ENCODE measurements at regions of chr16 and their contacts with region 1.

Region 1: DNA sequence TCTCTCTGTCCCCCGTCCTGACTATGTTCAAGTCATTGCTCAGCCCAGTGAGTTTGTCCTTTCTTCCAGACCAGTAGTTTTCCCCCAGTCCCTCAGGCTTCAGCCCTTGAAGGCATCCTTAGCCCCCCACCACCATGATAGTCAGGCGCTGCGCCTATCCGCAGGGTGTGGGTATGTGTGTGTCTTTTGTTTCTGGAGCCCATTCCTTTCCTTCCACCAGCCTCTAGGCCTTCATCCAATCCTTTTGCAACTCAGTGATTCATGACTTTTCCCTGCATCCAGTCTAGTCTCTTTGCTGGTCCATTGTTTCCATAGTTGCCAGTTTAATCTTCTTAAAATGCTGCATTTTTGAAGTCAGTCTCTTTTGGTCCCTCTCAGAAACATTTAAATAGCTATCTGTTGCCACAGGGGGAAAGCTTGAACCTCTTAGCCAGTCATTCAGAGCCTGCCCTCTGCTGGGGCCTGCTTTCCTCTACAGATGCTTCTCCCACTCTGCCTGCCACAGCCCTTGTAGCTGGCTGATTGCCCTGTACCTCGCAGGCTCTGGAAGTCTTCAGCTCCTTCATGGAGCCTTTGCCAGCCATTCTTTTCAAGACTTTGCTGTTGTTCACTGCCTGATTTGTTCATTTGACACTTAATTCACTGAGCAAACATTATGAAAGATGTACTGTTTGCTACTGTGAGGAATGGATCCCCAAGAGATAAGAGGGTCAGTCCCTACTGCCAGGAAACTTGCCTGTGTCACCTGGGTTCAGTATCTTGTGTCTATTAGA is 55.9 kb upstream of the ADCY7 start:
- DNase-seq: peak; percentile 25 to 73 (median 61)
- ATAC-seq: peak; percentile 93
- H3K4me3 ChIP-seq: no peak overlapping the region
- H3K4me3 Mint-ChIP-seq: no peak overlapping the region
- H3K27ac ChIP-seq: no peak overlapping the region
- H3K27ac Mint-ChIP-seq: peak overlapping the region; percentile 48 to 90 (median 83)
- H3K4me1 ChIP-seq: no peaks in the 10 kb centered on the region
- H3K4me1 Mint-ChIP-seq: peaks cover 17 to 50% (median 38%) of the 10 kb centered on the region in 7 donors
- H3K27me3 ChIP-seq: no peaks in the 10 kb centered on the region
- H3K27me3 Mint-ChIP-seq: no peaks in the 10 kb centered on the region

Region 2: DNA sequence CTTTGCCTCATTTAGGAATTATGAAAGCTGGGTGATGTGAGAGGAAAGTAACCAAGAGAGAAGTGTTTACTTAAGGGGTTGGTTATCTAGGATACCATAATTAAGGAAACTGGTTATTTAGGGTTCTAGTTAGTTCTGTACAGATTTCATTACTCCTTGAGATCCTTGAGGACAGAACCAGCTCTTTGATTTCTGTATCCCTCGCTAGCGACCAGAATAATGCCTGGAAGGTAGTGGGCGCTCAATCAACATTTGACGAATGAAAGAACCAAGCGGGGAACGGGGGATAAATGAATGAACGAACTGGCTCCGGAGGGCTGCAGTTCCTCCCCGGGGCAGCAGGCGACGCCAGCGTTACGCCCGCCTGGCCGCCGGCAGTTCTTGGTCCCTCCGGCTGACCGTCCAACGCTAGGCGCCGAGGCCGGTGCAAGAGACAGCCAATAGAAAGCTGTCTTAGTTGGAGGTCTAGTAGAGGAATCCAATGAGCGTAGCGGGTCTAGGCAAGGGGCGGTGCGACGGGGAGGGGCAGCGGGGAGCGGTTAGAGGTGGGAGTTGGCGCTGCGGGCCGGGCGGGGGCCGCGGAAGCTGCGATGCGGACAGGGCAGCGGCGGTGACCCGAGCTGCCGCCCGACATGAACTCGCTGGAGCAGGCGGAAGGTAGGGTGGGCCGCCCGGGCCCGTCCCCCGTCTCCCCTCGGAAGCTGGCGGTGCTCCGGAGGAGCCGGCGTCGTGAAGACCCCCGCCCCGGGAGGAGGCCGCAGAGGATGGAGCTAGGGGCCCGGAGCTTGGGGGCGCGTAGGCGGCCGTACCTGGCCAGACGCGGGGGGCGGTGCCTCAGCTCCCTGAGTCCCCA is 185.5 kb before region 1 on chr16 and contains the start of gene CNEP1R1:
- CTCF ChIA-PET with region 1: interaction called, 58 read pairs
- POLR2A ChIA-PET with region 1: interaction called, 8 read pairs
- intact Hi-C with region 1: loop called (anchors 1 kb)
- DNase-seq: peak; percentile 82 to 95 (median 92)
- ATAC-seq: peak; percentile 98
- H3K4me3 ChIP-seq: peak within 1 kb of the TSS; percentile 97
- H3K4me3 Mint-ChIP-seq: peak within 1 kb of the TSS; percentile 88 to 99 (median 96)
- H3K27ac ChIP-seq: peak within 1 kb of the TSS; percentile 81
- H3K27ac Mint-ChIP-seq: peak within 1 kb of the TSS; percentile 87 to 97 (median 94)
- H3K4me1 ChIP-seq: peaks cover 11 to 16% of the 10 kb centered on the region in 2 donors
- H3K4me1 Mint-ChIP-seq: peaks cover 5 to 42% (median 28%) of the 10 kb centered on the region in 7 donors
- H3K27me3 ChIP-seq: no peaks in the 10 kb centered on the region
- H3K27me3 Mint-ChIP-seq: peaks cover 0 to 16% (median 0%) of the 10 kb centered on the region in 5 donors
- total RNA-seq, gene CNEP1R1: 26.8 to 41.0 (median 34.3) TPM

Region 3: GRCh38 chr16:50152807-50153452 is 57.5 kb before region 1 on chr16 and contains the start of gene TENT4B:
- CTCF ChIA-PET with region 1: interaction called, 7 read pairs
- POLR2A ChIA-PET with region 1: interaction called, 6 read pairs
- intact Hi-C with region 1: loop called (anchors 1 kb)
- DNase-seq: peak; percentile 87 to 97 (median 96)
- ATAC-seq: peak; percentile 88
- H3K4me3 ChIP-seq: peak within 1 kb of the TSS; percentile 87
- H3K4me3 Mint-ChIP-seq: peak within 1 kb of the TSS; percentile 87 to 99 (median 94)
- H3K27ac ChIP-seq: peak within 1 kb of the TSS; percentile 99
- H3K27ac Mint-ChIP-seq: peak within 1 kb of the TSS; percentile 93 to 99 (median 97)
- H3K4me1 ChIP-seq: peaks cover 16 to 30% of the 10 kb centered on the region in 2 donors
- H3K4me1 Mint-ChIP-seq: peaks cover 28 to 44% (median 40%) of the 10 kb centered on the region in 7 donors
- H3K27me3 ChIP-seq: no peaks in the 10 kb centered on the region
- H3K27me3 Mint-ChIP-seq: no peaks in the 10 kb centered on the region
- total RNA-seq, gene TENT4B: 18.8 to 25.9 (median 23.8) TPM

Region 4: GRCh38 chr16:50326949-50327402 is 116.5 kb after region 1 on chr16:
- CTCF ChIA-PET with region 1: interaction called, 8 read pairs
- POLR2A ChIA-PET with region 1: no interaction called
- intact Hi-C with region 1: loop called (anchors 5 to 10 kb)
- DNase-seq: peak in 8 of 9 donors; percentile 53 to 89 (median 78)
- ATAC-seq: peak; percentile 97
- H3K4me3 ChIP-seq: no peak overlapping the region
- H3K4me3 Mint-ChIP-seq: peak overlapping the region in 8 of 10 donors; percentile 8 to 57 (median 26)
- H3K27ac ChIP-seq: peak overlapping the region; percentile 44
- H3K27ac Mint-ChIP-seq: peak overlapping the region; percentile 54 to 94 (median 81)
- H3K4me1 ChIP-seq: peaks cover 10 to 34% of the 10 kb centered on the region in 2 donors
- H3K4me1 Mint-ChIP-seq: peaks cover 37 to 62% (median 49%) of the 10 kb centered on the region in 7 donors
- H3K27me3 ChIP-seq: no peaks in the 10 kb centered on the region
- H3K27me3 Mint-ChIP-seq: no peaks in the 10 kb centered on the region

Region 5: DNA sequence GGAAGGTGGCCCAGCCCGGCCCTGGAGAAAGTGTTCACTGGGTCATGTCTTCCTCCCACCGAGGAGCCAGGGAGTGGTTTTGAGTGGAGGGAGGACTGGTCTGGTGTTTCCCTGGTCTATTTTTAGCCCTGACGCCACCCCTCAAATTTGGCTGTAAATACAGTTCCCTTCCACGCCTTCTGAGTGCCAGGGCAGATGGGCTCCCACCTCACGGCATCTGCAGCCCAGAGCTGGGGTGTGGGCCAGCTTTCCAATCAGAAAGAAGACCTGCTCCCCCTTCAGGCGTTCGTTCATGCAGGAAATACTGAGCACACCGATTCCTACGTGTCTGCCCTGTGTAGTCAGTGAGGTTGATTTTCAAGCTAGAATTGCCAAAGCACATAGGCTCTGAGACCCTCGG is 417.0 kb after region 1 on chr16:
- CTCF ChIA-PET with region 1: interaction called, 5 read pairs
- POLR2A ChIA-PET with region 1: no interaction called
- intact Hi-C with region 1: loop called in 1 of 2 experiments (anchors 1 kb)
- DNase-seq: peak in 7 of 9 donors; percentile 29 to 67 (median 57)
- ATAC-seq: peak; percentile 78
- H3K4me3 ChIP-seq: peak overlapping the region; percentile 29
- H3K4me3 Mint-ChIP-seq: peak overlapping the region; percentile 68 to 90 (median 84)
- H3K27ac ChIP-seq: peak overlapping the region; percentile 43
- H3K27ac Mint-ChIP-seq: peak overlapping the region; percentile 71 to 95 (median 88)
- H3K4me1 ChIP-seq: peaks cover 0 to 45% of the 10 kb centered on the region in 2 donors
- H3K4me1 Mint-ChIP-seq: peaks cover 29 to 50% (median 44%) of the 10 kb centered on the region in 7 donors
- H3K27me3 ChIP-seq: no peaks in the 10 kb centered on the region
- H3K27me3 Mint-ChIP-seq: no peaks in the 10 kb centered on the region

Region 6: DNA sequence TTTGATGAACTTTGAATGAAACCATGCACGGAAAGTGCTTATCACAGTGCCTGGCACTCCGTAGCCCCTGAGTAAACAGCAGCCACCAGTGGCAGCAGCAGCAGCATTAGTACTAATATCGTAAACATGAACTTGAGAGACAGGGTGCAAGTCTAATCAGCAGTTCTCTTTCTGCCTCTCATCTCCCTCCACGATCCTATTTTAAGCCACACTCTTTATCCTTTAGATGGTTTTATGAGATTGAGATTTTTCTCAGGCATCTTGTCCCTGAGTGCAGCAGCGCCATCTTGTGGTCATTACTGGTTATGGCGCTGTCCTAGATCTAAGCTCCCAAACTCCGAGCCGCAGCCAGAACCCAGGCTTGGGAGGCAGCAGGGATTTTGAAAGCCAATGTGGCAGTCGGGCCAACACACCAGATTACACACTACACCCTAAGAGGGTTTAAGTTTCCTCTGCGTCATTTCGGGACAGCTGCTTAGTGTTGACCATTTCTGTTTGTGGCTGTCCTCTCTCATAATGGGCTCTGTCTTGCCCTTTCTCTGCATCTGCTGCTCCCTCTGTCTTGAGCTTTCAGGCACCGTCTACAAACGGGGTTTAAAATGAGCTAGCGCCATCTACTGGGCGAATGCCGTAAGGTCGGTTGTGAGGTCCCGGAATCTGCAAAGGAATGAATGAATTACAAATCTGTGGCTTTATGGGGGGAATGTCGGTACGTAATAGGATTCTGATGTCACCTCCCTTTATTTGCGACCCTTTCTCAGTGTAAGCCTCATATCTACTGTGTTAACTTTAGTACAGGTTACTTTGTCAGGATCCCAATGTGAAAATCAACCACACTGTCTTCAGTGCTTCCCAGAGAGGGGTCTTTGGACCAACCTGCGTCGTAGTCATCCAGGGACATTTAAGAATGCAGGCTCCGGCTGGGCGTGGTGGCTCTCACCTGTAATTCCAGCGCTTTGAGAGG is 595.9 kb after region 1 on chr16:
- CTCF ChIA-PET with region 1: interaction called, 10 read pairs
- POLR2A ChIA-PET with region 1: no interaction called
- intact Hi-C with region 1: loop called (anchors 1 kb)
- DNase-seq: peak; percentile 66 to 92 (median 89)
- ATAC-seq: peak; percentile 98
- H3K4me3 ChIP-seq: peak overlapping the region; percentile 34
- H3K4me3 Mint-ChIP-seq: peak overlapping the region; percentile 12 to 90 (median 80)
- H3K27ac ChIP-seq: no peak overlapping the region
- H3K27ac Mint-ChIP-seq: peak overlapping the region; percentile 15 to 92 (median 81)
- H3K4me1 ChIP-seq: peaks cover 3 to 5% of the 10 kb centered on the region in 2 donors
- H3K4me1 Mint-ChIP-seq: peaks cover 8 to 19% (median 13%) of the 10 kb centered on the region in 7 donors
- H3K27me3 ChIP-seq: no peaks in the 10 kb centered on the region
- H3K27me3 Mint-ChIP-seq: no peaks in the 10 kb centered on the region

Measured in naive thymus-derived CD4-positive, alpha-beta T cell (primary cell).